Naive thymus-derived CD4-positive, alpha-beta T cell (primary cell): ENCODE measurements at regions of chr2 and their contacts with region 1.

Region 1: DNA sequence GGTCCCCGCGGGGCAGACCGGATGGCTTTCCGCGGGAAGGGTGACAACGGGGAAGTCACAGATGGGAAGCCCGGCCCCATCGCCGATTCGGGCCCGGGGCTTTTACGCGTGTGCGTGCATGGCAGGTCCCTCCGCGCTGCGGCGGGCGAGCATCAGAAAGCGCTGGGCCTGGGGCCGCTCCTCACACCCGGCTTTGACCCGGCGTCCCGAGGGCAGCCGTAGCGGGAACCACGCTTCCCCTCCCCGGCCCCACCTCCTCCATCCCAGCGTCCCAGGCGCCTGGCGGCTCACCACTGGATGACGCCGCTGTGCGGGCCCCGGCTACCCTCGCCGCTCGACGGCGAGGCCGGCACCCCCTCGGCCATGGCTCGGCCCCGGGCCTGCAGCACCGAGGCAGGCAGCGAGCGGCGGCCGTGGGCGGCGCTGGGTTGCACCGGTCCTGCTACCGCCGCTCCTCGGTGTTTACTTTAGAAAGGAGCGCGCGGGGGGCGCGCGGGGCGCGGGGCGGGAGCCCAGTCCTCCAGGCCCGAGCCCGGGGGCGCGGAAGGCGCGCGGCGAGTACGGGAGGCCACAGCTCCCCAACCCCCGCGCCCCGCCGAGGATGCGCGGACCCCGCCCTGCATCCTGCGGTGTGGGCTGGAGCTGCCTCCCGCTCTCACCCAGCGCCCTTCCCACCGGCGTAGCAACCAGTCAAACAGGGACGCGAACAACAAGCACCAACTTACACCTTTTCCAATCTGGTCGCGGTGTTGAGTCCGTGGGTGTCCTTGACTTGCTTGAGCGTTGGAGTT is 806 bp downstream of the RFX8 start:
- DNase-seq: peak; percentile 7 to 70 (median 20)
- ATAC-seq: peak; percentile 46
- H3K4me3 ChIP-seq: peak overlapping the region; percentile 48
- H3K4me3 Mint-ChIP-seq: peak overlapping the region; percentile 81 to 90 (median 85)
- H3K27ac ChIP-seq: no peak overlapping the region
- H3K27ac Mint-ChIP-seq: peak overlapping the region in 5 of 9 donors; percentile 36 to 92 (median 73)
- H3K4me1 ChIP-seq: peaks cover 0 to 6% of the 10 kb centered on the region in 2 donors
- H3K4me1 Mint-ChIP-seq: peaks cover 6 to 50% (median 11%) of the 10 kb centered on the region in 7 donors
- H3K27me3 ChIP-seq: no peaks in the 10 kb centered on the region
- H3K27me3 Mint-ChIP-seq: peaks cover 0 to 7% (median 0%) of the 10 kb centered on the region in 5 donors

Region 2: GRCh38 chr2:101551336-101551888 is 77.3 kb after region 1 on chr2:
- CTCF ChIA-PET with region 1: no interaction called
- POLR2A ChIA-PET with region 1: interaction called, 4 read pairs
- intact Hi-C with region 1: loop called in 1 of 2 experiments (anchors 5 kb)
- DNase-seq: peak in 2 of 9 donors; percentile 14 to 24
- ATAC-seq: no peak
- H3K4me3 ChIP-seq: no peak overlapping the region
- H3K4me3 Mint-ChIP-seq: peak overlapping the region in 6 of 10 donors; percentile 2 to 69 (median 36)
- H3K27ac ChIP-seq: no peak overlapping the region
- H3K27ac Mint-ChIP-seq: peak overlapping the region in 4 of 9 donors; percentile 17 to 82 (median 45)
- H3K4me1 ChIP-seq: peaks cover 0 to 15% of the 10 kb centered on the region in 2 donors
- H3K4me1 Mint-ChIP-seq: peaks cover 16 to 27% (median 21%) of the 10 kb centered on the region in 7 donors
- H3K27me3 ChIP-seq: no peaks in the 10 kb centered on the region
- H3K27me3 Mint-ChIP-seq: no peaks in the 10 kb centered on the region

Region 3: GRCh38 chr2:101655702-101656422 is 181.8 kb after region 1 on chr2:
- CTCF ChIA-PET with region 1: no interaction called
- POLR2A ChIA-PET with region 1: no interaction called
- intact Hi-C with region 1: loop called in 1 of 2 experiments (anchors 1 kb)
- DNase-seq: no peak
- ATAC-seq: no peak
- H3K4me3 ChIP-seq: no peak overlapping the region
- H3K4me3 Mint-ChIP-seq: no peak overlapping the region
- H3K27ac ChIP-seq: no peak overlapping the region
- H3K27ac Mint-ChIP-seq: no peak overlapping the region
- H3K4me1 ChIP-seq: peaks cover 5 to 10% of the 10 kb centered on the region in 2 donors
- H3K4me1 Mint-ChIP-seq: peaks cover 11 to 25% (median 16%) of the 10 kb centered on the region in 7 donors
- H3K27me3 ChIP-seq: no peaks in the 10 kb centered on the region
- H3K27me3 Mint-ChIP-seq: no peaks in the 10 kb centered on the region